ENCODE measurements at regions of chr11 and their contacts with region 1.

Region 1: GRCh38 chr11:69670158-69670845 is 4.9 kb downstream of the LTO1 start:
- DNase-seq: peak; percentile 89
- ATAC-seq: peak; percentile 76
- H3K4me3 Mint-ChIP-seq: no peak overlapping the region
- H3K27ac Mint-ChIP-seq: peak overlapping the region; percentile 86
- H3K4me1 Mint-ChIP-seq: peaks cover 16% of the 10 kb centered on the region
- H3K27me3 Mint-ChIP-seq: no peaks in the 10 kb centered on the region
- CTCF ChIP-seq: peak; percentile 77

Region 2: GRCh38 chr11:69292221-69292648 is 378.1 kb before region 1 on chr11:
- CTCF ChIA-PET with region 1: interaction called, 10 read pairs
- POLR2A ChIA-PET with region 1: no interaction called
- DNase-seq: peak; percentile 80
- ATAC-seq: peak; percentile 43
- H3K4me3 Mint-ChIP-seq: no peak overlapping the region
- H3K27ac Mint-ChIP-seq: no peak overlapping the region
- H3K4me1 Mint-ChIP-seq: peaks cover 15% of the 10 kb centered on the region
- H3K27me3 Mint-ChIP-seq: no peaks in the 10 kb centered on the region
- CTCF ChIP-seq: peak; percentile 92

Region 3: DNA sequence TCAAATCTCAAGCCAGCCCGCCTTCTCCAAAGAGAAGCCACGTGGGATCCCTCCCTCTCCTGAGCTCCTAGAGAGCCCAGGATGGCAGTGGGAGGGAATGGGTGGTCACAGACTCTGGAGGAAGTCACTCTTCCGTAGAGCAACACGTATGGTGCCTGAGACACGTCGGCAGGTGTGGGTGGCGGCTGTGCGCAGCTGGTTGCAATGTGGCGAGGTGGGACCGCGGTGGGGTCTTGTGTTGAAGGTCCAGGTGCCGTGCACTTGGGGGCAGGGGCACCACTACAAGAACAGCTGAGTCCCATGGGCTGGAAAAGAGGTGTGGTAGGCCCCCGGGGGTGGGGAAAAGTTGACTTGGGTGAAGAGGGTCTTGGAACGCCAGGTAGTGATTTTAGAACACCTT is 42.8 kb before region 1 on chr11:
- CTCF ChIA-PET with region 1: no interaction called
- POLR2A ChIA-PET with region 1: no interaction called
- DNase-seq: no peak
- ATAC-seq: no peak
- H3K4me3 Mint-ChIP-seq: no peak overlapping the region
- H3K27ac Mint-ChIP-seq: no peak overlapping the region
- H3K4me1 Mint-ChIP-seq: no peaks in the 10 kb centered on the region
- H3K27me3 Mint-ChIP-seq: peaks cover 4% of the 10 kb centered on the region
- CTCF ChIP-seq: no peak

Region 4: GRCh38 chr11:69642913-69643632 is 27.2 kb before region 1 on chr11:
- CTCF ChIA-PET with region 1: interaction called, 30 read pairs
- POLR2A ChIA-PET with region 1: interaction called, 4 read pairs
- DNase-seq: peak; percentile 77
- ATAC-seq: peak; percentile 2
- H3K4me3 Mint-ChIP-seq: peak overlapping the region; percentile 67
- H3K27ac Mint-ChIP-seq: no peak overlapping the region
- H3K4me1 Mint-ChIP-seq: peaks cover 8% of the 10 kb centered on the region; the same call in 1 of the 2 replicates
- H3K27me3 Mint-ChIP-seq: no peaks in the 10 kb centered on the region
- CTCF ChIP-seq: peak; percentile 92

Region 5: DNA sequence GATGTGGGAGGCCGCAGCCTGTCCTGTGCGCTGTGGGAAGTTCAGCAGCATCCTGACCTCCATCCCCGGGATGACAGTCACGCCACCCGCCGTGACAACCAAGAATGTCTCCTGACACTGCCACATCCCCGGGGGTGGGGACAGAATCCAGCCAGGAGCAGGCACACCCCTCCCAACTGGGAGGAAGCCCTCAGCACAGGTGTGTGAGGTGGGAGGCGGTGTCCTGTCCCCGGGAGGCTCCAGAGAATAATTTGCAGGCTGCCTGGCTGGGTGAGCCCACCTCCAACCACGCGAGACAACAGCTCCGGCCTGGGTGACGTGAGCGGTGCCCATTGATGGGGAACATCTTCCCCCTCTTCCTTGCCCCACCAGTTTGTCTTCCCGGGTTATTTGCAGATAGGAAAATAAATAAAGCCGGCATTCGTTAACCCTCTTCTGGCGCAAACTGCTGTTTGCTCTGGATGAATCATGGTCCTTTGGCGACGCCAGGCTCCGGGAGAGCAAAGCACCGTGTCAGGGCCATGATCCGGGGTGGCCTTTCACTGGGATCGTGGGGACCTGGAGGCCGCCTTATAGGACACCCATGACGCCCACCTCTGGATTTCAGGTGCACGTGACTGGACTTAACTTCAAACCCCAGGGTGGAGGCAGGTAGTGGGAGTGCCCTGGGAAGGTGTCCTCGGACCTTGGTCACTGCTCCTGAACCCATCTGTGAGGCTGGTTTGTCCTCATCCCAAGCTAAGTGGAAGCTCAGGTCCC is 15.6 kb before region 1 on chr11:
- CTCF ChIA-PET with region 1: interaction called, 31 read pairs
- POLR2A ChIA-PET with region 1: interaction called, 4 read pairs
- DNase-seq: no peak
- ATAC-seq: no peak; the same call in 1 of the 2 replicates
- H3K4me3 Mint-ChIP-seq: no peak overlapping the region
- H3K27ac Mint-ChIP-seq: 0 out of 2 replicates have a peak overlapping the region, but pooled peaks have one; percentile 45
- H3K4me1 Mint-ChIP-seq: peaks cover 28% of the 10 kb centered on the region
- H3K27me3 Mint-ChIP-seq: no peaks in the 10 kb centered on the region
- CTCF ChIP-seq: no peak

Region 6: DNA sequence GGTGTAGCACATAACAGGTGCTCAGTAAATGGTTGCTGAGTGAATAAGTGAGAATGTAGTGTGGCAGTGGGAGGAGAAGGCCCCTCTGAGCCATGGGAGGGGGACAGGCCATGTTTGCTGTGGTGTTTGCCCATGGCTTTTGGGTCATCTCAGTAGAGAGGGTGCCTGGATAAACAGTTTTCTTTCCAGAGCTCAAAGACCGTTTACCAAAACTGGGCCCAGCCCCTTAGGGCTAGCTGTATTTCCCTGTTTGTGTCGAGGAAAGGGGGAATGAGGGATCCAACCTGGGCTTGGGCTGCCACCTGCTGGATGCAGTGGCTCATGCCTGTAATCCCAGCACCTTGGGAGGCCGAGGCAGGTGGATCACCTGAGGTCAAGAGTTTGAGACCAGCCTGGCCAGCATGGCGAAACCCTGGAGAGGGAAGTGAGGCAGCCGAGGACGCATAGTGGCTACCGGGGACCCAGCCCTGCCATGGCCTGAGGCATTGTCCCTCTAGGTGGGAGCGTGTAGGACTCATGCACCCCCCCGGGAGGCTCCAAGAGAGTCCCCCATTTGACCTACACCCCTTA is 13.5 kb after region 1 on chr11:
- CTCF ChIA-PET with region 1: interaction called, 30 read pairs
- POLR2A ChIA-PET with region 1: no interaction called
- DNase-seq: peak; percentile 75
- ATAC-seq: peak; percentile 69
- H3K4me3 Mint-ChIP-seq: no peak overlapping the region
- H3K27ac Mint-ChIP-seq: no peak overlapping the region
- H3K4me1 Mint-ChIP-seq: peaks cover 5% of the 10 kb centered on the region
- H3K27me3 Mint-ChIP-seq: peaks cover 10% of the 10 kb centered on the region
- CTCF ChIP-seq: peak; percentile 59

Region 7: DNA sequence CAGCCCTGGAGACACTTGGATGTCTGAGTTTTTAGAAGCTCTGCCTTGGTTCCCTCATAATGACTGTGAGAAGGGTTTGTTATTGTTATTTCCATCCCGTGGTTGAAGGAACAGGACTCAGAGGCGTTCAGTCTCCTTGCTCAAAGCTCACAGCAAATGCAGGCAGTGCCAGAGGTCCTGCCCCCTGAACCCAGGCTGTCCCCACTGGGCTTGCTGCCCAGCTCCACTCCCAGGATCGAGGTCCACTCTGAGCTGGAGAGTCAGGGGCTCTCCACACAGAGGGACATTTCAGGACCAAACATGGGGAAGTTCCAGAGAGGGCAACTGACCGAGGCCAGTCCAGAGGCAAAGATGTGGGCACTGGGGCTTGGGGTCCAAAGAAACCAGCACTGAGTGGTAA is 90.0 kb after region 1 on chr11:
- CTCF ChIA-PET with region 1: no interaction called
- POLR2A ChIA-PET with region 1: no interaction called
- DNase-seq: no peak
- ATAC-seq: no peak
- H3K4me3 Mint-ChIP-seq: no peak overlapping the region
- H3K27ac Mint-ChIP-seq: no peak overlapping the region
- H3K4me1 Mint-ChIP-seq: peaks cover 6% of the 10 kb centered on the region
- H3K27me3 Mint-ChIP-seq: no peaks in the 10 kb centered on the region; the same call in 1 of the 2 replicates
- CTCF ChIP-seq: no peak